ENCODE measurements at regions of chr3 and their contacts with region 1.

Region 1: DNA sequence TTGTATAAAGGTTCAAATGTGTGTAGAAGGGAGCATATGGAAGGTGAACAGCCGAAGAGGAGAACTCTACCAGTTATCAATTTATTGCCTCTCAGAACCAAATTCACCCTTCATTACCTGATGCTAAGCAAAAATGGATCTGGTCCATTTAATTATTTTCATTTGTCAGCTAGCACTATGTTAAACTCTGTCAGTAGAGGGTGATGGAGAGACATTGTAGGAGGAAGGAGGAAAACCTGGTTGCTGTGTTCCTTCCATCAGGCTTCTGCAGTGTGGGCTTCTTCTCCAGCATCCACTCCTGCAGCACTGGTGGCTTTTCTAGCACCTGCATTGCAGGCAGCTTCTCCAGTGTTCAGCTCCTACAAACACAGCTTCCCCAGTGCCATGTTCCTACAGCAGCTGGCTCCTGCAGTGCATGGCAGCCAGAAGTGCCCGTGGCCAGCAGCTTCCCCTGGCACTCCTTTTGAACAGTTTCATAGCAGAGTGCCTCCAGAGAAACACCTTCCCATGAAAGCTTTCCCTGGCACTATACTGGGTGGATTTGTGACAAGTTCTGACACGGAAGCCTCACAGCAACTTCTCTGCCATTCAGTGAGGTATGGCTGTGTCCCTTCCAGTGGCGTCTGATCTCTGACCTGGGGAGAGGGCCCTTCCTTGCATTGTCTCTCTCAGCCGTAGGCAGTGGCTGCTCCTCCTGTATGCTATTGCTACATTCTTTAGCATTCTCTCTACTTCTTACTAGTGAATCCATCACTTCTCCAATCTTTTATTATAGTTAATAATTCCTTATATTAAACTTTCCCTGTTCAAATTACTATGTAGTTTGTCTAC is 14.6 kb upstream of the IL17RD start:
- DNase-seq: no peak
- ATAC-seq: peak in 1 of 8 donors; percentile 31
- H3K4me3 ChIP-seq: no peak overlapping the region
- H3K27ac ChIP-seq: no peak overlapping the region
- H3K4me1 ChIP-seq: no peaks in the 10 kb centered on the region
- H3K27me3 ChIP-seq: peaks cover 0 to 5% (median 0%) of the 10 kb centered on the region in 7 donors
- CTCF ChIP-seq: peak in 7 of 9 donors; percentile 25 to 38 (median 34)

Region 2: GRCh38 chr3:57221883-57222282 is 42.1 kb after region 1 on chr3:
- intact Hi-C with region 1: loop called in 4 of 10 experiments (anchors 5 to 10 kb)
- DNase-seq: no peak
- ATAC-seq: no peak
- H3K4me3 ChIP-seq: no peak overlapping the region
- H3K27ac ChIP-seq: no peak overlapping the region
- H3K4me1 ChIP-seq: peaks cover 0 to 11% (median 5%) of the 10 kb centered on the region in 9 donors
- H3K27me3 ChIP-seq: no peaks in the 10 kb centered on the region
- CTCF ChIP-seq: peak in 8 of 9 donors; percentile 18 to 58 (median 42)

Region 3: DNA sequence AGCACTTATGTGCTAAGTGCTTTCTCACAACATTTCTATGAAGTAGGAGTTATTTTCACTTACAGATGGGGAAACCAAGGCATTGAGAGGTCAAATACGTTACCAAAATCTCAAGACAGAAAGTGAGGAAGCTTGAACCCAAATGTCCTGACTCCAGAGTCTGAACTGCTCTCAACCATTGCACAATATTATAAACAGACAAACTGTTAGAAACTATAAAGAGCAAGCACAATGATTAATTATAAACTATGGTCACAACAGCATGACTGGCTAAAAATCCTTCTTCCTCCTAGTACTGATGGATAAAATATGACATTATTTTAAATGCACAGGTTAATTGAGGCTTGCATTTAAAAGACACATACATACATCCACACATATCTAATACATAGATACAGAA is 190.5 kb after region 1 on chr3:
- intact Hi-C with region 1: no loop called
- DNase-seq: no peak
- ATAC-seq: no peak
- H3K4me3 ChIP-seq: no peak overlapping the region
- H3K27ac ChIP-seq: no peak overlapping the region
- H3K4me1 ChIP-seq: no peaks in the 10 kb centered on the region
- H3K27me3 ChIP-seq: no peaks in the 10 kb centered on the region
- CTCF ChIP-seq: no peak

Measured in heart right ventricle (tissue), 16 donors.